Panc1 (cell line): ENCODE measurements at regions of chr6 and their contacts with region 1.

Region 1: GRCh38 chr6:30862156-30862875 is 22.0 kb upstream of the DDR1 start:
- DNase-seq: no peak
- ATAC-seq: no peak; the same call in 1 of the 2 replicates
- H3K4me3 ChIP-seq: no peak overlapping the region
- H3K27ac ChIP-seq: no peak overlapping the region
- H3K4me1 ChIP-seq: no peaks in the 10 kb centered on the region
- H3K27me3 ChIP-seq: no peaks in the 10 kb centered on the region
- CTCF ChIP-seq: no peak

Region 2: GRCh38 chr6:30626484-30627366 is 235.6 kb before region 1 on chr6 and contains the start of gene ATAT1:
- CTCF ChIA-PET with region 1: no interaction called
- POLR2A ChIA-PET with region 1: no interaction called
- in situ Hi-C with region 1: no loop called
- intact Hi-C with region 1: no loop called
- DNase-seq: no peak
- ATAC-seq: peak; percentile 97
- H3K4me3 ChIP-seq: peak within 1 kb of the TSS; percentile 62 to 90
- H3K27ac ChIP-seq: peak within 1 kb of the TSS; percentile 84
- H3K4me1 ChIP-seq: 0 out of 2 replicates have a peak, but pooled peaks cover 2% of the 10 kb centered on the region
- H3K27me3 ChIP-seq: no peaks in the 10 kb centered on the region
- CTCF ChIP-seq: no peak
- total RNA-seq, gene ATAT1: 15.8 TPM

Region 3: DNA sequence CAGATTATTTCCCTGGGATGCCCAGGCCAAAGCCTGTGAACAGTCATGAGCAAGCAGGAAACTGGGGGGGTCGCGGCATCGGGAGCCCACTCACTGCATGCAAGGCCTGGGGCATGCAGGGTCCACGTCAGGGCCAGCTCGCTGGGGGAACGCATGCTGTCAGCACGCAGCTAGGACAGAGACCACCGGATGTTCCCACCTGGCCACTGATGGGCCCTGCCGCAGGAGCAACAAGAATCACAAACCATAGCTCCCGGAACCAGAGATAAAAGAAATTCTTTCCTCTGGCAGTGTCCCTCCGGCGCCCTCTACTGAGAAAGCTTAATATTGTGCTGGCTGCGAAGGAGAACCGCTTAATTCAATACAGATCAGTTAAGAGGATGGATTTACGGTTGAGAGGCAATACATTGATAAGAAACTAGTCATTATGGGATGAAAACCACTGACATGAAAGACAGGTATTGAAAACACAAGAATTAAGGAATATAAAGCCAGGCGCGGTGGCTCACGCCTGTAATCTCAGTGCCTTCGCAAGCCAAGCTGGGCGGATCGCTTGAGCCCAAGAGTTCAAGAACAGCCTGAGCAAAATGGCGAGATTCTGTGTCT is 217.4 kb after region 1 on chr6:
- CTCF ChIA-PET with region 1: no interaction called
- POLR2A ChIA-PET with region 1: no interaction called
- in situ Hi-C with region 1: loop called (anchors 10 kb)
- intact Hi-C with region 1: no loop called
- DNase-seq: no peak
- ATAC-seq: peak; percentile 91
- H3K4me3 ChIP-seq: 0 out of 4 replicates have a peak overlapping the region, but pooled peaks of 1 of the 2 experiments have one; percentile 23
- H3K27ac ChIP-seq: no peak overlapping the region
- H3K4me1 ChIP-seq: no peaks in the 10 kb centered on the region
- H3K27me3 ChIP-seq: no peaks in the 10 kb centered on the region
- CTCF ChIP-seq: peak; percentile 97